ENCODE measurements at regions of chr3 and their contacts with region 1.

Region 1: GRCh38 chr3:157136647-157137387 is 23.1 kb downstream of the CCNL1 start:
- DNase-seq: peak; percentile 35
- H3K4me3 Mint-ChIP-seq: no peak overlapping the region
- H3K27ac Mint-ChIP-seq: no peak overlapping the region
- H3K4me1 Mint-ChIP-seq: peaks cover 27% of the 10 kb centered on the region
- H3K27me3 Mint-ChIP-seq: no peaks in the 10 kb centered on the region
- CTCF ChIP-seq: no peak

Region 2: GRCh38 chr3:156535162-156535627 is 601.6 kb before region 1 on chr3:
- CTCF ChIA-PET with region 1: interaction called, 5 read pairs
- POLR2A ChIA-PET with region 1: no interaction called
- intact Hi-C with region 1: loop called (anchors 1 kb)
- DNase-seq: peak; percentile 91
- H3K4me3 Mint-ChIP-seq: no peak overlapping the region
- H3K27ac Mint-ChIP-seq: peak overlapping the region; percentile 1
- H3K4me1 Mint-ChIP-seq: peaks cover 7% of the 10 kb centered on the region
- H3K27me3 Mint-ChIP-seq: no peaks in the 10 kb centered on the region
- CTCF ChIP-seq: no peak

Region 3: DNA sequence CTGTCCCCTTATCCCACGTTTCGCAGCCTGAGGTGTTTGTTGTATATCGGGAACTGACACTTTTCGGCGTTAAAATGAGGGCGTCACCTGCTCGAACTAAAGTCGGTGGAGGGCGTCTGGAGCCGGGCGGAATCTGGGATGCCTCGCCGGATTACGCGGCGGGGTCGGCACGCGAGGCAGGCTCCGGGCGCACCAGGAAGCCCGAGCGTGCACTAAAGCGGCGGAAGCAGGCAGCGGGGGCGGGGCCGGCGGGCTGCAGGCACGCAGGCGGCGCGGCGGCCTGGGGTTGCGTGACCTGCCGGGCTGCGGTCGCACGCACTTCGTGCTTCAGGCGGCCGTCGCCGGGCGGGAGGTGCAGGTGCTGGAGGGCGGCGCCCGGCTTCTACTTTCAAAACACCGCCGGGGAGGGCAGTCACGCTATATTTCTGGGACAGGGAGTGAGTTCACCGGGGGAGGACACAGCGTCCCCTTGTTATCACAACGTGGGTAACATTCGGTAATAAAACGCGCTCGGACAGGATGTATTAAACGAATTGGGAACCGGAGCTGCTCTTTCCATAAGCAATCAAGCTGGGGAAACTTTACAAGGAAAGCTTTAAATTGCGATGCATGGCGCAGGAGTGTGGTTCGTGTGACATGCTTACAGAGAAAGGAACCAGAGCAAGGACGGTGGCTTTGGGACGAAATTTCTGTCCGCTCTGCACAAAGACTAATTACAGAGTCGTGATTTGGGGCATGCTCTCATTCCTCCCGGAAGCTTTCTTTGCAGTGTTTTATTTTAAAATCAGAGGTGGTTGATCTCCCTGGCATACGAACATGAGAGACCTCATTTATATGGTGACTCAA is 319.8 kb before region 1 on chr3:
- CTCF ChIA-PET with region 1: interaction called, 11 read pairs
- POLR2A ChIA-PET with region 1: interaction called, 11 read pairs
- intact Hi-C with region 1: loop called (anchors 5 kb)
- DNase-seq: peak; percentile 86
- H3K4me3 Mint-ChIP-seq: peak overlapping the region; percentile 82
- H3K27ac Mint-ChIP-seq: peak overlapping the region; percentile 95
- H3K4me1 Mint-ChIP-seq: peaks cover 41% of the 10 kb centered on the region
- H3K27me3 Mint-ChIP-seq: no peaks in the 10 kb centered on the region
- CTCF ChIP-seq: no peak

Region 4: DNA sequence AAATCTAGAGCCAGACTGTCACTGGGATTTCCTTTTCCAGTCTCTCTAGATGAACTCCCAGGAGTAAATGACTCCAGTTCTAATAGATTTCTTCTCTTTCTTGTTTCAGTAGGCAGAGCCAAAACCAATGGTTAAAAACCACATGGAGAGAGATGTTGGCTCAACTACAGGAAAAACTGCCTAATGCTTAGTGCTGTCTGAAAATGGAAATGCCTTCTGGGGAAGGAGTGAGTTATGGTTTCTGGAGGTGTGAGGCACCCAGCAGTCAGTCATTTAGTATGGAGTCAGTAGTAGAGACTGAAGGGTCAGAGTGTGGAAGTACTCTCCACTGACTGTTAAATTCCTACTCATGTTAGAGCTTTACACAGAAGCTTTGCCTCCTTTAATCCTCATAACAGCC is 113.6 kb before region 1 on chr3:
- CTCF ChIA-PET with region 1: no interaction called
- POLR2A ChIA-PET with region 1: no interaction called
- intact Hi-C with region 1: no loop called
- DNase-seq: no peak
- H3K4me3 Mint-ChIP-seq: no peak overlapping the region
- H3K27ac Mint-ChIP-seq: no peak overlapping the region
- H3K4me1 Mint-ChIP-seq: peaks cover 7% of the 10 kb centered on the region
- H3K27me3 Mint-ChIP-seq: no peaks in the 10 kb centered on the region
- CTCF ChIP-seq: no peak

Region 5: GRCh38 chr3:157099326-157100095 is 37.3 kb before region 1 on chr3:
- CTCF ChIA-PET with region 1: interaction called, 25 read pairs
- POLR2A ChIA-PET with region 1: interaction called, 331 read pairs
- intact Hi-C with region 1: no loop called
- DNase-seq: peak; percentile 71
- H3K4me3 Mint-ChIP-seq: no peak overlapping the region
- H3K27ac Mint-ChIP-seq: peak overlapping the region; percentile 78
- H3K4me1 Mint-ChIP-seq: peaks cover 22% of the 10 kb centered on the region
- H3K27me3 Mint-ChIP-seq: no peaks in the 10 kb centered on the region
- CTCF ChIP-seq: no peak

Region 6: DNA sequence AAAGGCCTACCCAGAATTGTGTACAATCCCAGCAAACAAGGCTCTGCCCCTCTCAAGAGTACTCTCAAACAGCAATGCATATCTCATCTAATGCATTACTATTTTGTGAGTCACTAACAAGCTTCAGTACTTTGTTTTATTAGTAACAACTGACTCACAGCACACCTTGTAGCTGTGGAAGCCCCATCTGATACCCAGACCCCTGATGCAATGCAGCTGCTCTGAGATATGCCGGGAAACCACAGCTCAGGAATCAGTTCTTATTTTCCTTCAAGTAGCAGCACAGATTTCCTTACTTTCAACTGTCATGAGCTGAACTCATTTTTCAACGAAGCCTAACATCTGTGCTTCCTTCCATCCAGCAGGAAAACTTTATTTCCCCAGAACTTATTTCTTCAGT is 14.7 kb before region 1 on chr3:
- CTCF ChIA-PET with region 1: interaction called, 26 read pairs
- POLR2A ChIA-PET with region 1: interaction called, 12 read pairs
- intact Hi-C with region 1: no loop called
- DNase-seq: peak; percentile 80
- H3K4me3 Mint-ChIP-seq: no peak overlapping the region
- H3K27ac Mint-ChIP-seq: peak overlapping the region; percentile 82
- H3K4me1 Mint-ChIP-seq: peaks cover 31% of the 10 kb centered on the region
- H3K27me3 Mint-ChIP-seq: no peaks in the 10 kb centered on the region
- CTCF ChIP-seq: no peak

Region 7: GRCh38 chr3:157174649-157175498 is 38.1 kb after region 1 on chr3:
- CTCF ChIA-PET with region 1: interaction called, 6 read pairs
- POLR2A ChIA-PET with region 1: interaction called, 21 read pairs
- intact Hi-C with region 1: no loop called
- DNase-seq: peak; percentile 99
- H3K4me3 Mint-ChIP-seq: peak overlapping the region; percentile 83
- H3K27ac Mint-ChIP-seq: peak overlapping the region; percentile 98
- H3K4me1 Mint-ChIP-seq: peaks cover 6% of the 10 kb centered on the region
- H3K27me3 Mint-ChIP-seq: no peaks in the 10 kb centered on the region
- CTCF ChIP-seq: no peak